Posterior vena cava (tissue), 2 donors: ENCODE measurements at regions of chr5 and their contacts with region 1.

Region 1: DNA sequence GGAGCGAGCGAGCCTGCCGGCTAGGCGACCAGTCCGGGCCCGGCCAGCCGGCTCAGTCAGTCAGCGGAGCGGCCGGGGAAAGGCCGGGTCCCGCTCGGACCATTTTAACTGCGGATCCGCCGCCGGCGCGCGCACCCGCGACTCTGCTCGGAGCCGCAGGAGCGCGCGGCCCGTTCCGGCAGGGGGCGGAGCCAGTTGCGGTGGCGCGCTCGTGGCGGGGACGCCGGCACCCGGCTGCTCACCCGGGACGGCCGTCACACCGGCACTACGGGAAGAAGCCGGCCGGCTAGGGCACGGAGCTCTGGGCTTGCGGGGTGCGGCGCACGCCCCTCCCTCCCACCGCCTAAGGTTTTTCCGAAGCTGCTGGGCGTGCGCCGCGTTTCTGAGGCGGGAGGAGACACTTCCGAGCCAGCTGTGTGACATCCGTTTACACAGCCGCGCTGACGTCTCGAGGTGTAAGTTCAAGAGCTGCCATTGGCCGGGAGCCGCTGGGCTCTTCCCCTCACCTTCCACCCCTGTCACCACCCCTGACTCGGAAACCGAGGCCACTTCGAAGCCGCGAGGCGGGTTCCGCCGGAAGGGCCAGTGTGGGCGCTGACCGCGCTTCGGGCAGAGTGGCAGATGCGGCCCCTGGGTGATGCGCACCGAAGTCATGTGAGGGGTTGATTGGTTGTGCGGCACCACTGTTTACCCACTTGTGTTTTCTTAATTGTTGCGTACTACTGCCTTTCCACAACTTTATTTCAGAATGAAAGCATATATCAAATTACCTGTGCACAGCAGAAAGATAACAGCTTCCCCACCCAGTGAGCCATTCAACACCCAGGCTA is at the start of gene FBXL17:
- DNase-seq: peak; percentile 99
- total RNA-seq, gene FBXL17: 18.1 to 24.1 TPM

Region 2: GRCh38 chr5:109739741-109740728 is 1357.9 kb after region 1 on chr5:
- intact Hi-C with region 1: loop called in 1 of 2 experiments (anchors 10 kb)
- DNase-seq: no peak